ENCODE measurements at regions of chr1 and their contacts with region 1.

Region 1: GRCh38 chr1:84620720-84621313 is 46.6 kb upstream of the CTBS start:
- DNase-seq: peak; percentile 79
- H3K4me3 Mint-ChIP-seq: peak overlapping the region; percentile 88
- H3K27ac Mint-ChIP-seq: peak overlapping the region; percentile 80
- H3K4me1 Mint-ChIP-seq: peaks cover 23% of the 10 kb centered on the region
- H3K27me3 Mint-ChIP-seq: no peaks in the 10 kb centered on the region

Region 2: GRCh38 chr1:84298328-84298683 is 322.5 kb before region 1 on chr1:
- intact Hi-C with region 1: loop called (anchors 5 kb)
- DNase-seq: peak; percentile 46
- H3K4me3 Mint-ChIP-seq: peak overlapping the region; percentile 86
- H3K27ac Mint-ChIP-seq: peak overlapping the region; percentile 68
- H3K4me1 Mint-ChIP-seq: peaks cover 39% of the 10 kb centered on the region
- H3K27me3 Mint-ChIP-seq: peaks cover 5% of the 10 kb centered on the region

Region 3: DNA sequence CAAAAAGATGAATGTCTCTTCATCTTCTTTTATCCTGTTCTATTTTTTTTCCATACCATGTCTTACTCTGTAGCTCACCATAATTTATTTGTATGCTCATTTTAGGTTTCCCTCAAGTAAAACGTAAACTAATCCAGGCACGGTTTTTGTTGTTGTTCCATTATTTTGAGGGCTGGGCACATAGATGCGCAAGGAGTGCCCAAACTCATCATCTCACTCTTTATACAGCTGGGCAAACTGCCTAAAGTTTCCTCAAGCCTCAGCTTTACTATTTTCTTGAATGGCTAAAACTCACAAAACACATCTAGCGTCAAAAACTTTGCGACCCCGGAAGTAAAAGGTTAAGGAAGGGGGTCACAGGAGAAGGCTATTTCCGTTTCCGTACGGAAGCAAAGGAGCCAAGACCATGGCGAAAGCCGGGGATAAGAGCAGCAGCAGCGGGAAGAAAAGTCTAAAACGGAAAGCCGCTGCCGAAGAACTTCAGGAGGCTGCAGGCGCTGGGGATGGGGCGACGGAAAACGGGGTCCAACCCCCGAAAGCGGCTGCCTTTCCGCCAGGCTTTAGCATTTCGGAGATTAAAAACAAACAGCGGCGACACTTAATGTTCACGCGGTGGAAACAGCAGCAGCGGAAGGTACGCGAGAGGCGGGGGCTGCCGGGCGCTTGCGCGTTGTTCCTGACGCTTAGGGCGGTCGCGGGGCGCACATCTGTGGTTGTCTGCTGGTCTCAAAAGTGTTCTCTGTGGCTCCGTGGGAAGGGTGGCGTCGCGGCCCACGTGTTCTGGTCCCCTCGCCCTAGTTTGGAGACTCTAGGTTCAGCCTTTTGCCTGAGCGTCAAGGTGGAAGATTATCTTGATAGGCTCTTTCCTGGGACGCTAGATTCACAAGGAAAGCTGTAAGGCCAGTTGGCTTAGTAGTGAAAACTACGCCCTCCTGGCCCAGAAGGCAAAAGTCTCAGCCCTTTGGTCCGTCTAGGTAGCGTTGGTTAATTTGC is 141.6 kb before region 1 on chr1 and contains the start of gene RPF1:
- intact Hi-C with region 1: loop called (anchors 1 kb)
- DNase-seq: peak; percentile 70
- H3K4me3 Mint-ChIP-seq: peak within 1 kb of the TSS; percentile 98
- H3K27ac Mint-ChIP-seq: peak within 1 kb of the TSS; percentile 97
- H3K4me1 Mint-ChIP-seq: peaks cover 34% of the 10 kb centered on the region
- H3K27me3 Mint-ChIP-seq: peaks cover 28% of the 10 kb centered on the region
- total RNA-seq, gene RPF1: 65.2 and 65.5 TPM in 2 replicates

Region 4: GRCh38 chr1:84598846-84599741 is 21.7 kb before region 1 on chr1:
- intact Hi-C with region 1: loop called (anchors 1 kb)
- DNase-seq: no peak
- H3K4me3 Mint-ChIP-seq: peak overlapping the region; percentile 30
- H3K27ac Mint-ChIP-seq: peak overlapping the region; percentile 78
- H3K4me1 Mint-ChIP-seq: peaks cover 24% of the 10 kb centered on the region
- H3K27me3 Mint-ChIP-seq: no peaks in the 10 kb centered on the region

Region 5: DNA sequence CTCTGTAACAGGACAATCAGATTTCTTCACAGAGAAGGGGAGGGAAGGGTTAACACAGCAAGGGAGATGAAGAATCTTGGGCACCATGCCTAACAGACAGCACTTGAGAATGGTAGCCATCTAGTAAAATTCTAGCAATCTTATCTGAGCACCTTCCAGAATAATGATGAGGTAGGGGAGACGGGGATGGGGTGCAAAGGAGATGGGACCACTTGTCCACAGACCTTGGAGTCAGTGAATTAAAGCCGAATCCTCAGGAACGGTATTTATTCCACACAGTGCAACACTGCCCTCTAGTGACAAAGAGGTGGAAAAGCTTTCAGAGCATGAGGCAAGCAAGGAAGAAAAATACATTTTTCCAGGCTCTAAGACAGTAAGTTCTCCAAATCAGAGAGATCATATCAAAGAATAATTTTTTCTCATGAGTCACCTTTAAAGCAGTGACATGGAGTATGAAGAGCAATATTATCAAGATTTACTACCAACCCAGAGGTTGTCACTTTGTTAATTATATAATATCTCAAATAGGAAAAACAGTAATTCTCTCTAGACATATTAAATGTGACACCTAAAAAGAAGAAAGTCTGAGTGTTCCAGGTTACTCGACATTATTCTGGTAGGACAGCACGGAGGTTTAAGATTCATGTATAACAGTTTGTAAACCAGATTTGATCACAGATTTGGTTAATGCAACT is 315.4 kb after region 1 on chr1:
- intact Hi-C with region 1: loop called (anchors 2 kb)
- DNase-seq: peak; percentile 26
- H3K4me3 Mint-ChIP-seq: no peak overlapping the region
- H3K27ac Mint-ChIP-seq: no peak overlapping the region
- H3K4me1 Mint-ChIP-seq: peaks cover 7% of the 10 kb centered on the region
- H3K27me3 Mint-ChIP-seq: no peaks in the 10 kb centered on the region